ENCODE measurements at regions of chr3 and their contacts with region 1.

Region 1: GRCh38 chr3:113947372-113948014 is at the start of gene ZDHHC23:
- DNase-seq: peak; percentile 80 to 87
- H3K4me3 ChIP-seq: peak within 1 kb of the TSS; percentile 90
- H3K4me3 Mint-ChIP-seq: peak within 1 kb of the TSS; percentile 80
- H3K27ac Mint-ChIP-seq: no peak within 1 kb of the TSS
- H3K4me1 ChIP-seq: no peaks in the 10 kb centered on the region
- H3K4me1 Mint-ChIP-seq: peaks cover 7% of the 10 kb centered on the region
- H3K27me3 ChIP-seq: no peaks in the 10 kb centered on the region
- H3K27me3 Mint-ChIP-seq: peaks cover 15% of the 10 kb centered on the region
- CTCF ChIP-seq: no peak
- total RNA-seq, gene ZDHHC23: 9.0 and 9.1 TPM in 2 replicates

Region 2: GRCh38 chr3:114056130-114057010 is 108.9 kb after region 1 on chr3 and contains the starts of genes CCDC191 and QTRT2:
- CTCF ChIA-PET with region 1: no interaction called
- POLR2A ChIA-PET with region 1: no interaction called
- intact Hi-C with region 1: loop called (anchors 2 kb)
- DNase-seq: peak; percentile 98 to 99
- H3K4me3 ChIP-seq: peak within 1 kb of the TSS; percentile 46
- H3K4me3 Mint-ChIP-seq: peak within 1 kb of the TSS; percentile 95
- H3K27ac Mint-ChIP-seq: peak within 1 kb of the TSS; percentile 99
- H3K4me1 ChIP-seq: no peaks in the 10 kb centered on the region
- H3K4me1 Mint-ChIP-seq: peaks cover 13% of the 10 kb centered on the region
- H3K27me3 ChIP-seq: no peaks in the 10 kb centered on the region
- H3K27me3 Mint-ChIP-seq: no peaks in the 10 kb centered on the region
- CTCF ChIP-seq: no peak
- total RNA-seq, gene CCDC191: 1.9 and 2.2 TPM in 2 replicates
- total RNA-seq, gene QTRT2: 30.7 and 35.7 TPM in 2 replicates

Region 3: GRCh38 chr3:114079761-114080160 is 132.3 kb after region 1 on chr3:
- CTCF ChIA-PET with region 1: no interaction called
- POLR2A ChIA-PET with region 1: no interaction called
- intact Hi-C with region 1: no loop called
- DNase-seq: no peak
- H3K4me3 ChIP-seq: no peak overlapping the region
- H3K4me3 Mint-ChIP-seq: no peak overlapping the region
- H3K27ac Mint-ChIP-seq: no peak overlapping the region
- H3K4me1 ChIP-seq: no peaks in the 10 kb centered on the region
- H3K4me1 Mint-ChIP-seq: no peaks in the 10 kb centered on the region
- H3K27me3 ChIP-seq: no peaks in the 10 kb centered on the region
- H3K27me3 Mint-ChIP-seq: no peaks in the 10 kb centered on the region
- CTCF ChIP-seq: no peak

Region 4: GRCh38 chr3:114112696-114113095 is 165.2 kb after region 1 on chr3:
- CTCF ChIA-PET with region 1: no interaction called
- POLR2A ChIA-PET with region 1: no interaction called
- intact Hi-C with region 1: no loop called
- DNase-seq: no peak
- H3K4me3 ChIP-seq: no peak overlapping the region
- H3K4me3 Mint-ChIP-seq: no peak overlapping the region
- H3K27ac Mint-ChIP-seq: no peak overlapping the region
- H3K4me1 ChIP-seq: no peaks in the 10 kb centered on the region
- H3K4me1 Mint-ChIP-seq: peaks cover 17% of the 10 kb centered on the region
- H3K27me3 ChIP-seq: no peaks in the 10 kb centered on the region
- H3K27me3 Mint-ChIP-seq: peaks cover 14% of the 10 kb centered on the region
- CTCF ChIP-seq: no peak

Measured in Caco-2 (cell line).